Thyroid gland (tissue), 4 donors: ENCODE measurements at regions of chr19 and their contacts with region 1.

Region 1: DNA sequence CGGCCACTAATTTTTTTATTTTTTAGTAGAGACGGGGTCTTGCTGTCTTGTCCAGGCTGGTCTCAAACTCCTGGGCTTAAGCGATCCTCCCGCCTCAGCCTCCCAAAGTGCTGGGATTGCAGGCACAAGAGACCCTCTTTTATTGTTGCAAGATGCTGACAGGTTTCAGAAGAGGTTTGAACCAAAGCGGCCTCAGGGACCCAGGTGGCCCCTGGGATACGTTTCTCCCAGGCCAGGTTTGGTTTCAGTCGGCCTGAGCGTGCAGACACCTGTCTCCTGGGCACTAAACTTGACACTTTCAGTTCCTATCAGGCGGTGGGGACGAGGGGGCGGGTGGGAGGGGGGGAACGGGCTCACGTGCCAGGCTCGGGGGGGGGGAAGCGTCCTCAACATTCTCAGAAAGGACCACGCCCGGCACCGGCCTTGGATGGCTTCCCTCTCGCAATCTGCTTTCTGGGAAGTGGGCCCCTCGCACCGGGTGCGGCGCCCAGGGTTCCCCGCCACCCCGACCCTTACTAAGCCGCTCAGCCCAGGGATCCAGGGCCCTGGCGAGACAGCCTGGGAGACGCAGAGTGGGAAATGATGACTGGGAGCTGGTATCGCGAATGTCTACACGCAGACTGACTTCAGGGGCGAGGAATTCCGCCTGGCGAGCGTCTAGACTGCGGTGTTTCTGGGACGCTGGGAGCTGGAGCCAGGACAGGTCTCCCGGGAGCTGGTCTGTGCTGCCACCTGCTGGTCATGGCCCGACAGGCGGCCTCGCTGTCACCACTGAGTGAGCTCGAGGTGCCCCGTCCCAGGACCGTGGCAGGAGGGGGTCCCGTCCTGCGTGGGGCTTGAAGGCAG is 91.6 kb downstream of the GNG7 start:
- DNase-seq: peak; percentile 94 to 95
- H3K4me3 ChIP-seq: peak overlapping the region in 1 of 3 donors; percentile 30
- H3K27ac ChIP-seq: peak overlapping the region; percentile 92 to 95 (median 94)
- H3K4me1 ChIP-seq: peaks cover 10 to 20% of the 10 kb centered on the region in 2 donors
- H3K27me3 ChIP-seq: no peaks in the 10 kb centered on the region
- CTCF ChIP-seq: peak; percentile 95 to 98 (median 97)
- POLR2A ChIP-seq: peak in 1 of 2 donors; percentile 68

Region 2: DNA sequence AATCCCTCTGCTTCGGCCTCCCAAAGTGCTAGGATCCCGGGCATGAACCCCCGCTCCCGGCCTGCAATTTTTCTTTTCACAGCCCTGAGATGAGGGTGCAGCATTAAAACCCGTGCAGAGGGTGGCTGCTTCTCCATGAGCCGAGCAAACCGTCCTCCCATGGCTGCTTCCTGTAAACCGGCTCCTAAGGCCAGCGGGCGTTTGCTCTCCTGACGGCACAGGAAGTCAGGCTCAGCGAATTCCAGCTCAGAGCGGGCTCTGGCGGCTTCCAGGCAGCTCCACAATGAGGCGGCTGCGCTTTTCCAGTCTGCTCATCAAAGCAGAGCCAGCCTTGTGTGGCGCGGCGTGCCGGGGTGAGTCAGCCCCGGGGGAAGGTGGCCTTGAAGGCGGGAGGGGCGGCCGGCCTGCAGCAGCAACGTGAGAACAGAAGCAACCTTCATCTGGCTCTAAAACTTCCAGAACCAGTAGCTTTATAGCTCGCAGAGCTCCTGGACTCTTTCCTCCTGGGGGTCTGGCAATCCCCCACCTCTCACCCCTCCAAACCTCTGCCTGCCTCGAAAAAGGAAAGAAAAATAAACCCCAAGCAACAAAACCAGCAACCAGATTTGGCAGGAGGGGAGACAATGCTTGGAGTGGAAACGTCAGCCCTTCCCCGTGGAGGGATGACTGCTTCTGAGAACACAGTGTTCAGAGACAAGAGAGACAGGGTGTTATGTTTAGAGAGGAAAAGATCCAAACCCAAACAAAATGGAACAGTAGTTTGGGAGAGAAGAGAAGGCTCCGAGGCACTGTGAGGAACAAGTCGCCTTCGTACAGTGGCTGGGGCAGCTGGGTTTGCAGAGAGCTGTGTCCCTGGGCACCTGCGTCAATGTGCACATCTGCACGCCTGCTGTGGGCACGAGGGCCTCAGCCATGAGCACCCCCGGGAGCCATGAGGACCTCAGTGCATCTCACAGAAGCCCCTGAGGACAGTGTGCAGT is 67.1 kb before region 1 on chr19:
- intact Hi-C with region 1: loop called (anchors 10 kb)
- DNase-seq: peak; percentile 98 to 99
- H3K4me3 ChIP-seq: no peak overlapping the region
- H3K27ac ChIP-seq: peak overlapping the region; percentile 99 to 100 (median 100)
- H3K4me1 ChIP-seq: peaks cover 66 to 72% of the 10 kb centered on the region in 2 donors
- H3K27me3 ChIP-seq: no peaks in the 10 kb centered on the region
- CTCF ChIP-seq: peak in 3 of 6 experiments; percentile 3 to 23 (median 17)
- POLR2A ChIP-seq: peak in 1 of 2 donors; percentile 79

Region 3: GRCh38 chr19:2578901-2579677 is 31.8 kb before region 1 on chr19:
- intact Hi-C with region 1: loop called (anchors 5 kb)
- DNase-seq: peak; percentile 96 to 97
- H3K4me3 ChIP-seq: peak overlapping the region in 2 of 3 donors; percentile 2 to 35
- H3K27ac ChIP-seq: peak overlapping the region; percentile 88 to 94 (median 92)
- H3K4me1 ChIP-seq: peaks cover 21 to 40% of the 10 kb centered on the region in 2 donors
- H3K27me3 ChIP-seq: no peaks in the 10 kb centered on the region
- CTCF ChIP-seq: peak; percentile 72 to 99 (median 96)
- POLR2A ChIP-seq: peak in 1 of 2 donors; percentile 76

Region 4: GRCh38 chr19:2691951-2692350 is 81.1 kb after region 1 on chr19:
- intact Hi-C with region 1: no loop called
- DNase-seq: no peak
- H3K4me3 ChIP-seq: no peak overlapping the region
- H3K27ac ChIP-seq: no peak overlapping the region
- H3K4me1 ChIP-seq: no peaks in the 10 kb centered on the region
- H3K27me3 ChIP-seq: no peaks in the 10 kb centered on the region
- CTCF ChIP-seq: no peak
- POLR2A ChIP-seq: no peak